B cell (primary cell): ENCODE measurements at regions of chr9 and their contacts with region 1.

Region 1: DNA sequence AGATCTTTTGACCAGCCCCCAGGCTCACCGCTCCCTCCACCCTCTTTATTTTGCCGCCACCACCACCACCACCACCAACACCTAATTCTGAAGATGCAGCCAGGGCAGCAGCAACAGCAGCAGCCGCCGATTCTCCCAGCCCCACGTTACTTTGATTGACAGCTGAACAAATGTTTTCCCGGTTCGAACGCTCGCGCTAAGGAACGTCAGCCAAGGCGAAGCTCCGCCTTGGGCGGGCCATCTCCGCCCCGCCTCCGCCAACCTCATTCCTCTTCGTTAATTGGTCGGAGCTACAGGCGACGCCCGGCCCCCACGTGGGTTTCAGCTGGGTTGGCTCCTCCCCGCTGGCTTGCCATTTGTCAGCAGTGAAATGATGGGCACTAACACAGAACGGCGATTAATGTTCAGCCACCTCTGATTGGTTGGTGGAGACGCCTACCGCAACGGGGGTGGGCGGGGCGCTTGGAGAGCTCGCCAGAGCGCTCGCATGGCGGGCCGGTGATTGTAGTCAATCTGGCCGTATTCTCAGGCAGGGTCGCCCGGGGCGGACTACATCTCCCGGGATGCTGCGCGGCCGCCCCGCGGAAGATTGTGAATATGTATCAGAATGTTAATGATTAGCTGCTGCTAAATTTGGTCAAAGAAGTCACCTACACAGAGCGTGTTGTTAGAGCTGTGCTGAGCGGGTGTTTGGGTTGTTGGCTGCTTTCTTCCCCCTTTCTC is at the start of gene TLE4:
- DNase-seq: peak; percentile 100
- ATAC-seq: peak; percentile 82
- H3K4me3 ChIP-seq: peak within 1 kb of the TSS; percentile 69 to 95 (median 92)
- H3K4me3 Mint-ChIP-seq: peak within 1 kb of the TSS; percentile 83
- H3K27ac ChIP-seq: peak within 1 kb of the TSS; percentile 80 to 91
- H3K27ac Mint-ChIP-seq: peak within 1 kb of the TSS; percentile 93
- H3K4me1 ChIP-seq: peaks cover 23 to 25% of the 10 kb centered on the region in 2 donors
- H3K4me1 Mint-ChIP-seq: peaks cover 38% of the 10 kb centered on the region
- H3K27me3 ChIP-seq: peaks cover 0 to 10% (median 5%) of the 10 kb centered on the region in 4 experiments
- H3K27me3 Mint-ChIP-seq: peaks cover 11% of the 10 kb centered on the region
- CTCF ChIP-seq: no peak
- total RNA-seq, gene TLE4: 57.3 and 65.1 TPM in 2 replicates

Region 2: GRCh38 chr9:78235756-78236538 is 1335.5 kb before region 1 on chr9 and contains the start of gene CEP78:
- CTCF ChIA-PET with region 1: no interaction called
- POLR2A ChIA-PET with region 1: no interaction called
- intact Hi-C with region 1: loop called (anchors 5 kb)
- DNase-seq: peak; percentile 91
- ATAC-seq: peak; percentile 99
- H3K4me3 ChIP-seq: peak within 1 kb of the TSS; percentile 50 to 90 (median 84)
- H3K4me3 Mint-ChIP-seq: no peak within 1 kb of the TSS
- H3K27ac ChIP-seq: peak within 1 kb of the TSS; percentile 58 to 84
- H3K27ac Mint-ChIP-seq: peak within 1 kb of the TSS; percentile 93
- H3K4me1 ChIP-seq: peaks cover 13 to 17% of the 10 kb centered on the region in 2 donors
- H3K4me1 Mint-ChIP-seq: peaks cover 26% of the 10 kb centered on the region
- H3K27me3 ChIP-seq: no peaks in the 10 kb centered on the region
- H3K27me3 Mint-ChIP-seq: no peaks in the 10 kb centered on the region
- CTCF ChIP-seq: no peak
- total RNA-seq, gene CEP78: 27.7 and 28.8 TPM in 2 replicates

Region 3: GRCh38 chr9:79559495-79560181 is 11.8 kb before region 1 on chr9:
- CTCF ChIA-PET with region 1: no interaction called
- POLR2A ChIA-PET with region 1: no interaction called
- intact Hi-C with region 1: no loop called
- DNase-seq: no peak
- ATAC-seq: no peak
- H3K4me3 ChIP-seq: no peak overlapping the region
- H3K4me3 Mint-ChIP-seq: no peak overlapping the region
- H3K27ac ChIP-seq: no peak overlapping the region
- H3K27ac Mint-ChIP-seq: no peak overlapping the region
- H3K4me1 ChIP-seq: no peaks in the 10 kb centered on the region
- H3K4me1 Mint-ChIP-seq: no peaks in the 10 kb centered on the region
- H3K27me3 ChIP-seq: peaks cover 0 to 3% (median 0%) of the 10 kb centered on the region in 4 experiments
- H3K27me3 Mint-ChIP-seq: peaks cover 18% of the 10 kb centered on the region
- CTCF ChIP-seq: no peak

Region 4: DNA sequence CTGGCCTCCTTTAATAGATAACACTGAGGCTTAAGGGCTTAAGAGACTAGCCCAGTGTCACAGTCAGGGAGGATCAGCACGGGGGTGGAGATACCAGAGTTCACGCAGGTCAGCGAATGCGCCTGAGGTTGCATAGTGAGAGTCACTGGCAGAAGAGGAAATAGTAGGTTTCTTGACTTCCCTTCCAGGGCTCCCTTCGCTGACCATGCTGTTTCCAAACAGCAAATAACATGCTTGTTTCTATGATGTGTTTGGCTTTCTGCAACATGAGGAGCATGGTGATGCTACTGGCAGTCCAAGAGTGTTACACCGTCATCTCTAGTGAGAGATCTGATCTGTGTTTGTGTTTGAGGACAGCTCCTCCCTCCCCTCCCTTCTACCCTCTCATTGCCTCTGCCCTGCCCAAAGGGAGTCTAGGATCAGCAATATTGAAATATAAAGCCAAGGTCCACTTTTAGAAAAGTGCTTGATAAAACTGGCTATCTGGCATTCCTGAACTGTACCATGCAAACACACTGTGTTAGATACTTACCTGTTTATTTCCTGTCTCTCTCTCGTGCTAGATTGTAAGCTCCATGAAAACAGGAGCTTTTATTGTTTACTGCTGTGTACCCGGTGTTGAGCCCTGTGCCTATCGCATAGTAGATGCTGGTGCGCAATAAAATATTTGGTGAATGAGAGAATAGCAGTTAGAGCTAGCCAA is 12.6 kb after region 1 on chr9:
- CTCF ChIA-PET with region 1: interaction called, 4 read pairs
- POLR2A ChIA-PET with region 1: interaction called, 8 read pairs
- intact Hi-C with region 1: loop called (anchors 1 kb)
- DNase-seq: peak; percentile 35
- ATAC-seq: peak; percentile 69
- H3K4me3 ChIP-seq: no peak overlapping the region
- H3K4me3 Mint-ChIP-seq: peak overlapping the region; percentile 26
- H3K27ac ChIP-seq: no peak overlapping the region
- H3K27ac Mint-ChIP-seq: peak overlapping the region; percentile 12
- H3K4me1 ChIP-seq: peaks cover 23 to 30% of the 10 kb centered on the region in 2 donors
- H3K4me1 Mint-ChIP-seq: peaks cover 63% of the 10 kb centered on the region
- H3K27me3 ChIP-seq: no peaks in the 10 kb centered on the region
- H3K27me3 Mint-ChIP-seq: no peaks in the 10 kb centered on the region
- CTCF ChIP-seq: no peak

Region 5: GRCh38 chr9:79673614-79674013 is 102.1 kb after region 1 on chr9:
- CTCF ChIA-PET with region 1: no interaction called
- POLR2A ChIA-PET with region 1: no interaction called
- intact Hi-C with region 1: no loop called
- DNase-seq: no peak
- ATAC-seq: no peak
- H3K4me3 ChIP-seq: no peak overlapping the region
- H3K4me3 Mint-ChIP-seq: peak overlapping the region; percentile 30
- H3K27ac ChIP-seq: no peak overlapping the region
- H3K27ac Mint-ChIP-seq: no peak overlapping the region
- H3K4me1 ChIP-seq: peaks cover 16 to 21% of the 10 kb centered on the region in 2 donors
- H3K4me1 Mint-ChIP-seq: peaks cover 45% of the 10 kb centered on the region
- H3K27me3 ChIP-seq: no peaks in the 10 kb centered on the region
- H3K27me3 Mint-ChIP-seq: no peaks in the 10 kb centered on the region
- CTCF ChIP-seq: no peak

Region 6: GRCh38 chr9:79817438-79818004 is 246.1 kb after region 1 on chr9:
- CTCF ChIA-PET with region 1: no interaction called
- POLR2A ChIA-PET with region 1: interaction called, 3 read pairs
- intact Hi-C with region 1: loop called (anchors 1 kb)
- DNase-seq: peak; percentile 56
- ATAC-seq: peak; percentile 42
- H3K4me3 ChIP-seq: no peak overlapping the region
- H3K4me3 Mint-ChIP-seq: peak overlapping the region; percentile 20
- H3K27ac ChIP-seq: no peak overlapping the region
- H3K27ac Mint-ChIP-seq: no peak overlapping the region
- H3K4me1 ChIP-seq: peaks cover 39 to 47% of the 10 kb centered on the region in 2 donors
- H3K4me1 Mint-ChIP-seq: peaks cover 46% of the 10 kb centered on the region
- H3K27me3 ChIP-seq: peaks cover 0 to 19% (median 6%) of the 10 kb centered on the region in 4 experiments
- H3K27me3 Mint-ChIP-seq: peaks cover 9% of the 10 kb centered on the region
- CTCF ChIP-seq: no peak

Region 7: DNA sequence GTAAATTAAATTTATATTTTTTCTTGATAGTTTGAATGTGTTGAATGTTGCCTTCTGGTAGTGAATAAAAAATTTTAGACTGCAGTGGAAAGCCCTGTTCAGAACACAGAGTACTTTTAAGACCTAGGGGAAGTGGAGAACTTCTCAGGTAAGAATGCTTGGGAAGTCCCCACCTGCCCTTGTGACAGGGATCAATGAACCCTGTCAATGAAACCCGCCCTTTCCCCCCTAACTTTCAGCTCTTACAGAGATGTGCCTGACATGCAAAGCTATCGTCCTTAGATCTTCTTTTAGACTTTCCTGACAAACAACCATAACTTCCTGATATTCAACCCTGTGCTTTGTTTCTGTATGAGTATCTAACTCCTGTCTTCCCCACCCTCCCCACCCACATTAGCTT is 563.0 kb after region 1 on chr9:
- CTCF ChIA-PET with region 1: no interaction called
- POLR2A ChIA-PET with region 1: no interaction called
- intact Hi-C with region 1: loop called (anchors 1 kb)
- DNase-seq: peak; percentile 91
- ATAC-seq: peak; percentile 96
- H3K4me3 ChIP-seq: no peak overlapping the region
- H3K4me3 Mint-ChIP-seq: peak overlapping the region; percentile 57
- H3K27ac ChIP-seq: peak overlapping the region; percentile 93 to 95
- H3K27ac Mint-ChIP-seq: peak overlapping the region; percentile 88
- H3K4me1 ChIP-seq: peaks cover 31 to 35% of the 10 kb centered on the region in 2 donors
- H3K4me1 Mint-ChIP-seq: peaks cover 42% of the 10 kb centered on the region
- H3K27me3 ChIP-seq: no peaks in the 10 kb centered on the region
- H3K27me3 Mint-ChIP-seq: no peaks in the 10 kb centered on the region
- CTCF ChIP-seq: no peak